ENCODE measurements at regions of chr15 and their contacts with region 1.

Region 1: DNA sequence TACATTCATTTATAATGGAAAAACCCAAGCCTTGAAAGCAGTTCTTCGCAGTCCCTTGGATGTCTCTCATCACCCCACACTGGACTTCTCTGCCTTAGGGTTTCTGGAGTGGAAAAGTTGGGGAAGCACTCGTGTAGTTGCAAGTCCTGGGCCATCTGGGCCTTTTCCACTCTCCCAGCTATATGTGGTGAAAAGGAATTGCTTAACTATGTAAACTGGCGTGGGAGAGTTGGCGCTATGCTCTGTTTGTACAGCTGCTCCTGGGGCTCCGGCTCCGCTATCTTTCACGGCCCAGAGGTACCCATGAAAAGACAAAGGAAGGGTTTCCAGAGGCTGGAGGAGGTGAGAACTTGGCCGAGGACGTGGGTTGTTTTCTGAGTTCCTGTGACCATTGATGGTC is 81.1 kb upstream of the MYZAP start:
- DNase-seq: no peak
- H3K4me3 ChIP-seq: no peak overlapping the region
- H3K27ac ChIP-seq: no peak overlapping the region
- H3K4me1 ChIP-seq: no peaks in the 10 kb centered on the region
- CTCF ChIP-seq: no peak

Region 2: DNA sequence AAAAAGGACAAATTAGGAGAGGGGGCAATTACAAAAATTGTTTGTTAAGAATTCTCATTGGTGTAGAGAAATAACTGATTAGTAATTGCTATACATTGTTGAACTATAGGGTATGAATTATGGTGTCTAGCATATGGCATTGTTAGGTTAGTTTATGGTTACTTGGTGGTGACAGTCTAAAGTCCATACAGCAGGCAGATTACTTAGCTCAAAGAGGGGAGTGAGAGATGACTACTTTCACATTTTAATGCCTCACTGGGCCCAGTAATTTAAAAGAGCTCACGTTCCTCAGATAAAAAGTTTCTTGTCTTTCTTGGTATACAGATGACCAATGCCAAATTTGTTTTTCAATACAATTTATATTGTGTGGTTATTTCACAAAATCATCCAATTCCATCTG is 1404.8 kb before region 1 on chr15:
- CTCF ChIA-PET with region 1: no interaction called
- POLR2A ChIA-PET with region 1: no interaction called
- intact Hi-C with region 1: loop called (anchors 5 kb)
- DNase-seq: no peak
- H3K4me3 ChIP-seq: no peak overlapping the region
- H3K27ac ChIP-seq: no peak overlapping the region
- H3K4me1 ChIP-seq: no peaks in the 10 kb centered on the region
- CTCF ChIP-seq: no peak

Measured in OCI-LY7 (cell line).